GM12878 (cell line): ENCODE measurements at regions of chr2 and their contacts with region 1.

Region 1: GRCh38 chr2:198098918-198099317 is 294.5 kb downstream of the PLCL1 start:
- DNase-seq: no peak
- ATAC-seq: no peak
- H3K4me3 ChIP-seq: no peak overlapping the region
- H3K27ac ChIP-seq: no peak overlapping the region
- H3K4me1 ChIP-seq: peaks cover 2% of the 10 kb centered on the region; the same call in 1 of the 2 replicates
- H3K27me3 ChIP-seq: no peaks in the 10 kb centered on the region
- CTCF ChIP-seq: no peak
- EP300 ChIP-seq: no peak
- POLR2A ChIP-seq: no peak
- RAD21 ChIP-seq: no peak

Region 2: GRCh38 chr2:198063242-198063641 is 35.7 kb before region 1 on chr2:
- CTCF ChIA-PET with region 1: interaction called, 3 read pairs
- POLR2A ChIA-PET with region 1: interaction called, 4 read pairs
- RAD21 ChIA-PET with region 1: interaction called, 7 read pairs
- SMC1A ChIA-PET with region 1: interaction called, 17 read pairs
- in situ Hi-C with region 1: no loop called
- intact Hi-C with region 1: no loop called
- DNase-seq: no peak
- ATAC-seq: peak; percentile 57
- H3K4me3 ChIP-seq: no peak overlapping the region
- H3K27ac ChIP-seq: no peak overlapping the region
- H3K4me1 ChIP-seq: no peaks in the 10 kb centered on the region
- H3K27me3 ChIP-seq: no peaks in the 10 kb centered on the region; a peak in 1 of 4 replicates
- CTCF ChIP-seq: no peak
- EP300 ChIP-seq: no peak
- POLR2A ChIP-seq: no peak
- RAD21 ChIP-seq: no peak

Region 3: GRCh38 chr2:198080879-198081765 is 17.8 kb before region 1 on chr2:
- CTCF ChIA-PET with region 1: interaction called, 5 read pairs
- POLR2A ChIA-PET with region 1: no interaction called
- RAD21 ChIA-PET with region 1: interaction called, 8 read pairs
- SMC1A ChIA-PET with region 1: interaction called, 13 read pairs
- in situ Hi-C with region 1: no loop called
- intact Hi-C with region 1: no loop called
- DNase-seq: no peak
- ATAC-seq: peak; percentile 58
- H3K4me3 ChIP-seq: no peak overlapping the region
- H3K27ac ChIP-seq: no peak overlapping the region
- H3K4me1 ChIP-seq: no peaks in the 10 kb centered on the region
- H3K27me3 ChIP-seq: peaks cover 0 to 3% of the 10 kb centered on the region in 2 experiments; a peak in 1 of 4 replicates
- CTCF ChIP-seq: no peak
- EP300 ChIP-seq: no peak
- POLR2A ChIP-seq: no peak
- RAD21 ChIP-seq: no peak

Region 4: DNA sequence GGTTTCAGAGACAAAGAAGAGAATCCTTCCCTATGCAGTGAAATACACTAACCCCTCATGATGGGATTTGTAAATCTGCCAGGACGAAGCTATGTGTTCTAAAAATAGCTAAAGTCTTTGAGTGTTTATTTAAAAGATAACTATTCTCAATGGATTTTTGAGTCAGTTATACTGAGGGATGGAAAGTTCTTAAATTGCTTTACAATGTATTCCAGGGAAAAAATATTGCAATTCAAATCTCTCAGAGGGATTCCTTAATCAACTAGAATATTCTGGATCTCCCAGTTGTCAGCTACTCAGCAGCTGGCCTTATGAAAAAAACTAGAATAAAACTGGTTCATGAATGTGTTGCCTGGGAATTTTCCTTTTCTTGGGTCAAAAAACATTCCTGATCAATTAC is 17.8 kb after region 1 on chr2:
- CTCF ChIA-PET with region 1: interaction called, 4 read pairs
- POLR2A ChIA-PET with region 1: no interaction called
- RAD21 ChIA-PET with region 1: interaction called, 4 read pairs
- SMC1A ChIA-PET with region 1: interaction called, 17 read pairs
- in situ Hi-C with region 1: no loop called
- intact Hi-C with region 1: no loop called
- DNase-seq: no peak
- ATAC-seq: no peak
- H3K4me3 ChIP-seq: no peak overlapping the region
- H3K27ac ChIP-seq: no peak overlapping the region
- H3K4me1 ChIP-seq: no peaks in the 10 kb centered on the region
- H3K27me3 ChIP-seq: no peaks in the 10 kb centered on the region
- CTCF ChIP-seq: no peak
- EP300 ChIP-seq: no peak
- POLR2A ChIP-seq: no peak
- RAD21 ChIP-seq: no peak